Esophagus squamous epithelium (tissue), 5 donors: ENCODE measurements at regions of chr9 and their contacts with region 1.

Region 1: GRCh38 chr9:136122425-136123383 is 4.0 kb upstream of the TMEM250 start:
- DNase-seq: no peak
- H3K4me3 ChIP-seq: peak overlapping the region in 2 of 4 donors; percentile 16 to 44
- H3K27ac ChIP-seq: no peak overlapping the region
- H3K4me1 ChIP-seq: peaks cover 20 to 33% (median 21%) of the 10 kb centered on the region in 3 donors
- H3K27me3 ChIP-seq: peaks cover 0 to 40% (median 2%) of the 10 kb centered on the region in 4 donors
- CTCF ChIP-seq: peak; percentile 93 to 98 (median 96)
- POLR2A ChIP-seq: no peak

Region 2: GRCh38 chr9:135797507-135798262 is 325.0 kb before region 1 on chr9:
- intact Hi-C with region 1: loop called (anchors 10 kb)
- DNase-seq: no peak
- H3K4me3 ChIP-seq: no peak overlapping the region
- H3K27ac ChIP-seq: no peak overlapping the region
- H3K4me1 ChIP-seq: peaks cover 0 to 11% (median 0%) of the 10 kb centered on the region in 3 donors
- H3K27me3 ChIP-seq: no peaks in the 10 kb centered on the region
- CTCF ChIP-seq: peak in 4 of 6 experiments; percentile 32 to 64 (median 38)
- POLR2A ChIP-seq: no peak

Region 3: DNA sequence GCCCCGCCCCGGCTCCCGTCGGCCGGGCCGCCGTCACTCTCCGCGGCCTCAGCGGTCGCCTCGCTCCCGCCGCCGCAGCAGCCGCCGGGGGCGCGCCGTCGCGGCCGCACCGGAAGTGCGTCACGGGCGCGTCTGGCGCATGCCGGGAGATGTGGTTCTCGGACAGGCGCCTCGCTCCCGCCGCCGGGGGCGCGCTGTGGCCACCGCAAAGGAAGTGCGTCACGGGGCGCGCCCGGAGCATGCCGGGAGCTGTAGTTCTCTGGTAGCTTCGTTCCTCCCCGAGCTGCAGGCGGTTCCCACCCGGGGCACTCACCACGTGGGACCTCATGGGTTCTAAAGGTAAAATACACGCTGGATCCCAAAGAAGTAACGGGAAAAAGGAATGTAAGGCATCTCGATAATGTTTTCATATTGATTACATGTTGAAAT is 161.4 kb before region 1 on chr9 and contains the start of gene UBAC1:
- intact Hi-C with region 1: loop called (anchors 2 kb)
- DNase-seq: peak; percentile 77
- H3K4me3 ChIP-seq: peak within 1 kb of the TSS; percentile 98 to 100 (median 98)
- H3K27ac ChIP-seq: peak within 1 kb of the TSS; percentile 94 to 96 (median 95)
- H3K4me1 ChIP-seq: peaks cover 23 to 38% (median 24%) of the 10 kb centered on the region in 3 donors
- H3K27me3 ChIP-seq: no peaks in the 10 kb centered on the region
- CTCF ChIP-seq: peak in 5 of 6 experiments; percentile 32 to 66 (median 49)
- POLR2A ChIP-seq: peak in 1 of 4 donors; percentile 15
- total RNA-seq, gene UBAC1: 47.6 to 63.2 (median 54.3) TPM

Region 4: GRCh38 chr9:136354592-136355085 is 231.9 kb after region 1 on chr9:
- intact Hi-C with region 1: no loop called
- DNase-seq: no peak
- H3K4me3 ChIP-seq: no peak overlapping the region
- H3K27ac ChIP-seq: peak overlapping the region in 2 of 4 donors; percentile 9 to 28
- H3K4me1 ChIP-seq: peaks cover 0 to 23% (median 3%) of the 10 kb centered on the region in 3 donors
- H3K27me3 ChIP-seq: no peaks in the 10 kb centered on the region
- CTCF ChIP-seq: no peak
- POLR2A ChIP-seq: no peak